PC-9 (cell line): ENCODE measurements at regions of chr14 and their contacts with region 1.

Region 1: GRCh38 chr14:54175298-54175942 is 218.8 kb upstream of the BMP4 start:
- DNase-seq: peak; percentile 37 to 71
- H3K4me3 ChIP-seq: no peak overlapping the region
- H3K27ac ChIP-seq: no peak overlapping the region
- H3K4me1 ChIP-seq: peaks cover 10% of the 10 kb centered on the region
- H3K27me3 ChIP-seq: no peaks in the 10 kb centered on the region
- CTCF ChIP-seq: peak; percentile 97

Region 2: DNA sequence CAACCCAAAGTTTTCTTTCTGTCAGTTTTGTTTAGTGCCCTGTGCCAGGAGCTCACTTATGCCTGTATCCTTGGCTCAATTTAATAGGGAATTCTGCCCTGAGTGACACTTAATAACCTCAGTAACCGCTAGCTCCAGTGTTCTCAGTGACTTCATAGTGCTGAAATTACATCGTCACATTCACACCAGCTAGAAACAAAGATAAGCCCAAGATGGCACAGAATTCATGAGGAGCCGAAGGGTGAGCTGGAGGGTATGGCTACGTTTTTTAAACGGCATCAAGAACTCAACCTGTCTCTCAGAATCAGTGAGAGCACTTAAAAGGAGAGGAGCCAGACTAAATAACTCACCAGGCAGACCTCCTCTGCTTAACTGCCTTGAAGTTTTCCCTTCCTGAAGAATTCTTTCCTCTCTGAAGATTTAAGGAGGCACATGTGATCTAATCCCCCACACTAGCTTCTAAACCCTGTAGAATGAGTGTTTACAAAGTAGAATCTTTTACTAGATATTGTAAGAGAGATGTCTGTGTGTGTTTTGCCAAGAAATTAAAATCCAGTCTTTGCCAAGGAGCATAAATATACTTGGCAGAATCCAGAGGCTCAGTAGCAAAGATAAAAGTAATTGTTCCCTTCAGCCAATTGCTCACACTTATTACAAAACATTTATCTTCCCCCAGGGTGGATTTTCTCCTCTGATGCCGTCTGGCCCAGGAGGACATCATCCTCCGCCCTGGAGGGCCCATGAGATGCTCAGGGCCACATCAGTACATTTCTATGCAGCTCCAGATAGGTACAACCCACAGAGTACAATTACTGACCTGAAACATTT is 1824.0 kb before region 1 on chr14:
- CTCF ChIA-PET with region 1: no interaction called
- POLR2A ChIA-PET with region 1: no interaction called
- intact Hi-C with region 1: no loop called
- DNase-seq: no peak
- H3K4me3 ChIP-seq: no peak overlapping the region
- H3K27ac ChIP-seq: no peak overlapping the region
- H3K4me1 ChIP-seq: peaks cover 16% of the 10 kb centered on the region
- H3K27me3 ChIP-seq: no peaks in the 10 kb centered on the region
- CTCF ChIP-seq: no peak

Region 3: DNA sequence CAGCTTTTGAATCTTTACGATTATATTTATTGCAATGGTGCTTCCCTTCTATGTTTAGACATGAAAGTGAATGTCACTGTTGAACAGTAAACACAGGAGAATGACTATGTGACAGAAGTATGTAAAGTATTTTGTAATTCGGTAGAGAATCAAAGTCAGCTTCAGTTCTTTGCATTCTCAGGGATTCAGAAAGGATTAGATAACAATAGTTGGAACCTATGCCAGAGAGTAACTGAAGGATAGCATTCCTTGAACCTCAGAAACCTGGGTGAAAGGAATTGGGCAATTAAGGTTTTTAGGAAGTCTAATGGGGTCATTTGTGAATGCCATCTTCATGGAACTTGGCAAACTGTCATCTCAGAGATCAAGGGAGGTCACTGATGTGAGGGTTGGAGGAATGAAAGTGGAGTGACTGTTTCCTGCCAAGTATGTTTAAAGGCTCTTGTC is 717.0 kb before region 1 on chr14:
- CTCF ChIA-PET with region 1: interaction called, 3 read pairs
- POLR2A ChIA-PET with region 1: no interaction called
- intact Hi-C with region 1: loop called (anchors 10 kb)
- DNase-seq: peak; percentile 54 to 91
- H3K4me3 ChIP-seq: no peak overlapping the region
- H3K27ac ChIP-seq: peak overlapping the region; percentile 43
- H3K4me1 ChIP-seq: peaks cover 18% of the 10 kb centered on the region
- H3K27me3 ChIP-seq: no peaks in the 10 kb centered on the region
- CTCF ChIP-seq: no peak

Region 4: DNA sequence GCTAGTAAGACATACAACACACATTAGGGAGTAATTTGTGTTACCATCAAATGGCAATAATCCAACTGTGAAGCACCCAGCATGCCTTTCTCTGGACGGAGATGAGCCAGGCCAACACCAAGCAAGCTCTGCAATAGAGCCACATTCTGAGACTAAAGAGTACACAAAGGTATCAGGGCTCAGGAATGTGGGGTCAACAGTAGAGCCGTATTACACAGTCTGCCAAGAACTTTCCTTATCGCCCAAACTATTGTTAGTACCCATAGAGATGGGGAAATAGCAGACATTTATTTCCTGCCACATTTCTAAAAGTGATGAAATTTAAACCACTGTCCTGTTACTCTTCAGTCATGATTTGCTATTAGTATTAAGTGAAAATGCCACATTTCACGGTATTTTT is 332.5 kb before region 1 on chr14:
- CTCF ChIA-PET with region 1: no interaction called
- POLR2A ChIA-PET with region 1: interaction called, 3 read pairs
- intact Hi-C with region 1: loop called (anchors 5 kb)
- DNase-seq: peak; percentile 73 to 90
- H3K4me3 ChIP-seq: no peak overlapping the region
- H3K27ac ChIP-seq: peak overlapping the region; percentile 45
- H3K4me1 ChIP-seq: peaks cover 56% of the 10 kb centered on the region
- H3K27me3 ChIP-seq: no peaks in the 10 kb centered on the region
- CTCF ChIP-seq: no peak

Region 5: DNA sequence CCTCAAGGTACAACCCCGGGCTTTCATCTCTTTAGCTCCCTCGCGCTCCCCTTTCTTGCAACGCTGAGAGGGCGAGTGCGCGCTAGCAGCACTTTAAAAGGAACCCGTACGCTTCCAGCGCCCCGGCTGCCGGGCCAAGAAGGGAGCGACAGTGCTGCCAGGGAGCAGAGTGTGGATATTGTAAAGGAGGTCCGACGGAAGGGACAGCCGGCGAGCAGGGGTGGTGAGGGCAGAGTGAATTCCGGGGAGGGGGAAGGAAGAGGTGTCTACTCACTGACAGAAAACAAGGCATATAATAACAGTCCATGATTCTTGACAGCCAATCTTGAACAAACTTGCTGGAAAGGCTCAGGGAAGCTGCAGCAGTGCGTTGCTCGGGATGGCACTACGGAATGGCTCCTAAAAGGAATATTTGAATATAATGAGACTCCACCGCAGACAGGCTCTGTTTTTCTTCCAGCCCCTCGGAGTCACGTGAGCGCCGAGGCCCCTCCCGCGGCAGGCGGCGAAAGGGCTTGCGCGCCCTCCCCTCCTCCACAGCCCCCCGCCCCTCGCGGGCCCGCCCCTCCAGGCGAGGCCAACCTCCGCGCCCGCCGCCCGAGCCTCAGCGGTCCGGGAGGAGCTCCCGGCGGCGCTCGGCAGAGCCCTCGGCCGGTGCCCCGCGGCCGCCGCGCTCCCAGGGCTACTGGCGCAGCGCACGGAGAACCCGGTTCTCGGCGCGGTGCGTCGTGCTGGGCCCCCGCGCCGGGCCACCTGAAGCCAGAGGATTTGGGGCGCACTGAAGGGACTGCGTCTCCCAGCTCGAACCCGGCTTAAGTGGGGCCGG is 222.2 kb before region 1 on chr14:
- CTCF ChIA-PET with region 1: interaction called, 9 read pairs
- POLR2A ChIA-PET with region 1: interaction called, 4 read pairs
- intact Hi-C with region 1: loop called (anchors 1 kb)
- DNase-seq: peak; percentile 40 to 80
- H3K4me3 ChIP-seq: peak overlapping the region; percentile 80
- H3K27ac ChIP-seq: peak overlapping the region; percentile 18
- H3K4me1 ChIP-seq: peaks cover 14% of the 10 kb centered on the region
- H3K27me3 ChIP-seq: no peaks in the 10 kb centered on the region
- CTCF ChIP-seq: no peak

Region 6: GRCh38 chr14:54116972-54117371 is 58.4 kb before region 1 on chr14:
- CTCF ChIA-PET with region 1: no interaction called
- POLR2A ChIA-PET with region 1: interaction called, 15 read pairs
- intact Hi-C with region 1: no loop called
- DNase-seq: no peak
- H3K4me3 ChIP-seq: no peak overlapping the region
- H3K27ac ChIP-seq: no peak overlapping the region
- H3K4me1 ChIP-seq: peaks cover 20% of the 10 kb centered on the region; the same call in 1 of the 2 replicates
- H3K27me3 ChIP-seq: no peaks in the 10 kb centered on the region
- CTCF ChIP-seq: no peak

Region 7: DNA sequence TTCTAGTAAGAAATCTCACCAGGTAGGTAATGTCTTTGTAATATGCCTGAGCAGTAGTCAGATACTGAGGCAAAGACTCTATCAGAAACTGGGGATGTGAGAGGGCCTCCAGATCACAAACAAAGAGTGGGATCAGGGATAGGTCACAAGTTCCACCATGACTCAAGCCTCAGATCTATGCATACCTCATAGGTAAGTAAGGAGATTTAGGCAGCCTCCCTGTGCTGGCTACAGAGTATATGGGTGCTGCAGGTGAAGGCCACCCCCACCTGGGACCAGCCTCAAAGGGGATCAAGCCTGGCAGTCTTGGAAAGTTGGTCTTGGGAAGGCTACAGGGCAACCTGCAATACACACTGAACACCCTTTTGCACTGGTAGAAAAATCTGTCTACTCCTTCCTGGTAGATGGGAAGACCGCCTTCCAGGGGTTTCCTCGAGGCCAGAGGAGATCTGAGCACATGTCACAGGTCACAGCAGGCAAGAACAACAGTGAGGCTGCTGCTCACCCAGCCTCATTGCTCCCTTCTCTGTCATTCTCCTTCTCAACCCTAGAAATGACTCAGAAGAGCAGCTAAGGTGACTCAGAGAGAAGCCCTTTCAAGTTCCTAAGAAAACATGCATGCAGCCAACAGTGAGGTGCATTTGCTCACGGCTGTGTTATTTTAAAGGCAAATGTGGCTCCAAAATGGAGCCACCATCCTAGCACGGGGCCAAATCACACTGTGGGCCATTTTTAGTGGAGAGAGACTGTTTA is 78.0 kb after region 1 on chr14:
- CTCF ChIA-PET with region 1: interaction called, 3 read pairs
- POLR2A ChIA-PET with region 1: interaction called, 8 read pairs
- intact Hi-C with region 1: loop called (anchors 1 kb)
- DNase-seq: peak; percentile 53 to 94
- H3K4me3 ChIP-seq: no peak overlapping the region
- H3K27ac ChIP-seq: peak overlapping the region; percentile 98
- H3K4me1 ChIP-seq: peaks cover 48% of the 10 kb centered on the region
- H3K27me3 ChIP-seq: no peaks in the 10 kb centered on the region
- CTCF ChIP-seq: no peak